Heart left ventricle (tissue), 16 donors: ENCODE measurements at regions of chr2 and their contacts with region 1.

Region 1: GRCh38 chr2:107376910-107377309 is 449.8 kb upstream of the RGPD4 start:
- DNase-seq: peak in 2 of 5 donors; percentile 18 to 43
- ATAC-seq: peak in 2 of 4 donors; percentile 37 to 63
- H3K4me3 ChIP-seq: no peak overlapping the region
- H3K27ac ChIP-seq: no peak overlapping the region
- H3K4me1 ChIP-seq: peaks cover 0 to 14% (median 0%) of the 10 kb centered on the region in 12 donors
- H3K27me3 ChIP-seq: no peaks in the 10 kb centered on the region
- CTCF ChIP-seq: no peak
- POLR2A ChIP-seq: no peak

Region 2: DNA sequence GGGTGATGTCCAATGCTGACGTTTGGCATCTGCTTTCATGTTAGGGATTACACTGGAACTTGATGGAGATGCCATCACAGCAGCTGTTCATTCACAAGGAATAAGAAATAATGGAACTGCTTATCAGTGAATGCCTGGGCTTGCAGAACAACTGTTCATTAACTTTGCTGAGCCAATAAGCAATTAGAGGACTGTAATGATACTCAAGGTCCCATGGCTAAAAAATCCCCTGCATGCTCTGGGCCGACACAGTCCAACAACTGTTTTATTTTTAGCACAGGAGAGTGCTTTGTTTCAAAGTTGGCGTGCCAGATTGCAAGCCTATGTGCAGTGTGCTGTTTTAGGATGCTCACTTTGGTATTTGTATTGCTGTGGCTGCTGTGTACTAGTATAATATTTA is 41.8 kb after region 1 on chr2:
- intact Hi-C with region 1: loop called in 1 of 10 experiments (anchors 2 kb)
- DNase-seq: peak in 3 of 5 donors; percentile 11 to 28 (median 18)
- ATAC-seq: peak; percentile 94 to 97 (median 96)
- H3K4me3 ChIP-seq: no peak overlapping the region
- H3K27ac ChIP-seq: peak overlapping the region in 3 of 12 donors; percentile 6 to 58 (median 35)
- H3K4me1 ChIP-seq: peaks cover 0 to 15% (median 5%) of the 10 kb centered on the region in 12 donors
- H3K27me3 ChIP-seq: no peaks in the 10 kb centered on the region
- CTCF ChIP-seq: no peak
- POLR2A ChIP-seq: no peak

Region 3: DNA sequence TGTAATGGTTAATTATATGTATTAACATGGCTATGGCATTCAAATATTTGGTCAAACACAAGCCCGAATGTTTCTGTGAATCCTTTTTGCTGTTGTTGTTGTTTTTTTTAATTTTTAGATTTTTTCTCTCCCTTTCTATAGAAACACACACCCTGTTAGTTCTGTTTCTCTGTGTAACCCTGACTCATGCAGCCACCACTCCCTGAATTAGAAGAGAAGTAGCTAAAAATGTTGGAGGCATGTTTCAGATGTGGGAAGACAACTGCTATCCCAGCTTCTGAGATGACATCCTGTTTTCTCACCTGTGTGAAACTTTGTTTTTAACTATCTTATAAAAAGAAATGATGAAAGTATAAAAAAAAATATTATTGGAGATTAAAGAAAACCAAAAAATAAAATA is 230.1 kb after region 1 on chr2:
- intact Hi-C with region 1: no loop called
- DNase-seq: no peak
- ATAC-seq: no peak
- H3K4me3 ChIP-seq: no peak overlapping the region
- H3K27ac ChIP-seq: no peak overlapping the region
- H3K4me1 ChIP-seq: no peaks in the 10 kb centered on the region
- H3K27me3 ChIP-seq: no peaks in the 10 kb centered on the region
- CTCF ChIP-seq: no peak
- POLR2A ChIP-seq: no peak